ENCODE measurements at regions of chr19 and their contacts with region 1.

Region 1: DNA sequence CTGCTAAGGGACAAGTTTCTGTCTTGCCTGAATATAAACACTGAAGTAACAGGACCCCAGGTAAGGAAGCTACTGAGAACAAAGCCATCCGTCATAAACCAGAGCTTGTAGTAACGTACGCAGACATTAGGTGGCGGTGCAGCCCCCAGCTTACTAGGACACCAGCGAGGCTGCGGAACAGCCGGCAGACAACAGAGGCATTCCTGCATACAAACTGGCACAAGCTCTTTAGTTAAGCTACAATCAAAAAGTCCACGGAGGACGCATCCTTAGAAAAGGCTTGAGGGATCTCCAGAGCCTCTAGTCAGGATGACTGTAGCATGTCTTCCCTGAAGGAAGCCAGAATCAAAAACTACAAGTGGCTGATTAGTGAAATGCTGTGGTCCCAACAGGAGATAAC is 26.2 kb downstream of the ZNF160 start:
- DNase-seq: peak; percentile 91
- ATAC-seq: peak; percentile 99
- H3K4me3 Mint-ChIP-seq: no peak overlapping the region
- H3K27ac Mint-ChIP-seq: peak overlapping the region; percentile 95
- H3K4me1 Mint-ChIP-seq: peaks cover 10% of the 10 kb centered on the region
- H3K27me3 Mint-ChIP-seq: no peaks in the 10 kb centered on the region
- CTCF ChIP-seq: peak; percentile 70

Region 2: GRCh38 chr19:52962394-52963246 is 114.4 kb before region 1 on chr19 and contains the start of gene ZNF816:
- CTCF ChIA-PET with region 1: interaction called, 12 read pairs
- POLR2A ChIA-PET with region 1: no interaction called
- DNase-seq: peak; percentile 99
- ATAC-seq: peak; percentile 98
- H3K4me3 Mint-ChIP-seq: peak within 1 kb of the TSS; percentile 99
- H3K27ac Mint-ChIP-seq: peak within 1 kb of the TSS; percentile 98
- H3K4me1 Mint-ChIP-seq: peaks cover 21% of the 10 kb centered on the region
- H3K27me3 Mint-ChIP-seq: peaks cover under 1% of the 10 kb centered on the region; the same call in 1 of the 2 replicates
- CTCF ChIP-seq: no peak
- total RNA-seq, gene ZNF816: 10.8 to 15.3 TPM (median 12.4 TPM) in 3 replicates

Region 3: DNA sequence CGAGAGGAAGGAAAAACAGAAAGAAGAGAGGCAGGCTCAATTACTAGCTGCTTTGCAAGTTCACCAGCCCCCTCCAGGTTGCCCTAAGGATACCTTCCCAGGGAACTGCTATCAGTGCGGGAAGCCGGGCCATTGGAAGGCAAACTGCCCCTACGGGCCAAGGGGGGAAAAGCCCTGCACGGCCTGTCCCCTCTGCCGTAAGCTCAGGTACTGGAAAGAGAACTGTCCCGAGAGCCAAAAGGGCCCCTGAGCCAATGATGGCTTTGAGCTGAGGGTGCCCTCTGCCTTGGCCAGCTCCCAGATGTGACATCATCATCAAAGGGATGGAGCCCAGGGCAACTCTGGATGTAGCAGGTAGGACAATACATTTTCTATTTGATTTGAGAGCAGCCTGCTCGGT is 66.4 kb before region 1 on chr19:
- CTCF ChIA-PET with region 1: interaction called, 12 read pairs
- POLR2A ChIA-PET with region 1: no interaction called
- DNase-seq: peak; percentile 81
- ATAC-seq: peak; percentile 99
- H3K4me3 Mint-ChIP-seq: no peak overlapping the region
- H3K27ac Mint-ChIP-seq: no peak overlapping the region
- H3K4me1 Mint-ChIP-seq: peaks cover 8% of the 10 kb centered on the region
- H3K27me3 Mint-ChIP-seq: peaks cover 10% of the 10 kb centered on the region
- CTCF ChIP-seq: no peak

Region 4: DNA sequence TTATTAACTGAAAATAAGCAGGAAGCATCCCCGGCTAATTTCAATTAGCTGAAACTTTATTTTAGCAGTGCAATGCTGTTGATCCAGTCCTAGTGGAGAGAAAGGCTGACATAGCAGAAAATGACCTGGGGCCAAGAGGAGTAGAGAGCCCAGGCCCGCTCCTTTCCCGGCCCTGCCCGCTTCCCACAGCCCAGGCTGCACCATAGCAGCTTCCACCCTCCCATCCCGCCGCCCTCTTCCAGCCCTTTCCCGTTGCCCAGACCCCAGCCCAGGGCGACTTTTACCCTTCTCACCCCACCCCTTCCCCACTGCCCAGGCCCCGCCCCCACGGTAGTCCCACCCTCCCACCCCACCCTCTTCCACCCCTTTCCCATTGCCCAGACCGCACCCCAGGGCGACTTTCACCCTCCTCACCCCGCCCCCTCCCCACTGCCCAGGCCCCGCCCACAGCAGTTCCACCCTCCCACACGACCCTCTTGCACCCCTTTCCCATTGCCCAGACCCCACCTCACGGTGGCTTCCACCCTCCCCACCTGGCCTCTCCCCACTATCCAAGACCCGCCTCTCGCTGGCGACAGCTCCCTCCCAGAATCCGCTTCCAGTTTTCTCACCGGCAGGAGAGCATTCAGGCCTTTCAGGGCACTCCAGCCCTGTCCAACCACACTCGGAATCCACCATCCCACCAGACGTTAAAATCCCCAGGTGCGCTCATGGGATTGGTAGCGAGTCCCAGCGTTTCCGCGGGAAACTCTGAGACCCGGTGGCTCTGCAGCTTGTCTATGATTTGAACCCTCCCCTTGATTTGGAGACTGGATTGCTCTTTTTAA is 18.0 kb after region 1 on chr19:
- CTCF ChIA-PET with region 1: interaction called, 39 read pairs
- POLR2A ChIA-PET with region 1: no interaction called
- DNase-seq: peak; percentile 83
- ATAC-seq: peak; percentile 71
- H3K4me3 Mint-ChIP-seq: peak overlapping the region; percentile 60
- H3K27ac Mint-ChIP-seq: peak overlapping the region; percentile 90
- H3K4me1 Mint-ChIP-seq: peaks cover 43% of the 10 kb centered on the region
- H3K27me3 Mint-ChIP-seq: no peaks in the 10 kb centered on the region
- CTCF ChIP-seq: no peak

Region 5: DNA sequence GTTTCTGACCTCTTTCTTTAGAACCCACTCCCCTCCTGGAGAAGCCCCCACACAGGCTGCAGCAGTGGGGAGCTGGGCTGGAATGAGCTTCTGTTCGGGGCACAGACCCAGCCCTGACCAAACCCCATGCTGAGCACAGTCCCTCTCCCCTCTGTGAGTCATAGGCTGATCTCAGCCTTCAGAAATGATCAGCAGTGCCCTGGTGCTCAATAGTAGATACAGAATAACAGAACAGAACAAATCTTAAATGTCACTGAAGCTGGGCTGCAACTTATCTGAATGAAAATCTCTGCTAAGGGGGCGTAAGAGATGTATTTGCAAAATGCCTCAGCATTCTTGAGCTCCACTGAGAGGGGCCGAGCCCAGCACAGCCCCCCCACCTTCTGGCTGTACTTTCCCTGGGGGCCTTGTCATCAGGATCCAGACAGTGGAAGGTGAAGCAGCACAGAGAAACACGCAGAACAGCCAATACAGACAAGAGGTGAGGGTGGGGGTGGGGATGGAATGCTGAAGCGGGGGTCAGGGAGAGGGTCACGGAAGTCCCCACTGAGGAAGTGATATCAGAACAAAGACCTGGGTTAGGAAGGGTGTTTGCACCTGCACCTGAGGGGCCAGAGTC is 106.3 kb after region 1 on chr19:
- CTCF ChIA-PET with region 1: interaction called, 16 read pairs
- POLR2A ChIA-PET with region 1: interaction called, 3 read pairs
- DNase-seq: no peak
- ATAC-seq: no peak
- H3K4me3 Mint-ChIP-seq: no peak overlapping the region
- H3K27ac Mint-ChIP-seq: no peak overlapping the region
- H3K4me1 Mint-ChIP-seq: no peaks in the 10 kb centered on the region
- H3K27me3 Mint-ChIP-seq: no peaks in the 10 kb centered on the region; the same call in 1 of the 2 replicates
- CTCF ChIP-seq: no peak

Region 6: DNA sequence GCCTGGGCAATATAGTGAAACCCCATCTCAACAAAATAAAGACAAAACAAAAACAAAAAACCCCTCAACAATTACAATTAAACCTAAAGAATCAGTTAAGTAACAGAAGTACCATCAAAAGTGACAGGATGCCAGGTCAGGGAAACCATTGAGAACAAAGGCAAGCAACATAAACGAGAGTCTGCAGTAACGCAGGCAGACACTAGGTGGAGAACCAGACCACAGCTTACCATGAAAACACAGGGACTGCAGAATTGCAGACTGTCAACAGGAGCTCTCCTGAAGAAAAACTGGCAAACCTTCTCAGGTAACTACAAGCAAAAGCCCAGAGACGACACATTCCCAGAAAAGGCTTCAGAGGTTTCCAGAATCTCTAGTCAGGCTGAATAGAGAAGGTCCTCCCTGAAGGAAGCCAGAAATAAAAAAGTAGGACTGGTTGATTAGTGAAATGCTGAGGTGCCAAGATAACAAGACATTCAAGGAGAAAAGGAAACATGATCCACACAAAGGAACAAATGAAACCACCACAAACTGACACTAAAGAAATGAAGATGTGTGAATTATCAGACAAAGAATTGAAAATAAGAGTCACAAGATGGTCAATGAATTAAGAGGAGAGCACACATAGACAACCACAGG is 118.4 kb after region 1 on chr19:
- CTCF ChIA-PET with region 1: interaction called, 16 read pairs
- POLR2A ChIA-PET with region 1: no interaction called
- DNase-seq: peak; percentile 81
- ATAC-seq: peak; percentile 36
- H3K4me3 Mint-ChIP-seq: peak overlapping the region; percentile 24
- H3K27ac Mint-ChIP-seq: peak overlapping the region; percentile 35; the same call in 1 of the 2 replicates
- H3K4me1 Mint-ChIP-seq: peaks cover 29% of the 10 kb centered on the region
- H3K27me3 Mint-ChIP-seq: peaks cover 28% of the 10 kb centered on the region
- CTCF ChIP-seq: peak; percentile 81

Measured in WTC11 (cell line).